AG04449 (cell line): ENCODE measurements at regions of chr10 and their contacts with region 1.

Region 1: DNA sequence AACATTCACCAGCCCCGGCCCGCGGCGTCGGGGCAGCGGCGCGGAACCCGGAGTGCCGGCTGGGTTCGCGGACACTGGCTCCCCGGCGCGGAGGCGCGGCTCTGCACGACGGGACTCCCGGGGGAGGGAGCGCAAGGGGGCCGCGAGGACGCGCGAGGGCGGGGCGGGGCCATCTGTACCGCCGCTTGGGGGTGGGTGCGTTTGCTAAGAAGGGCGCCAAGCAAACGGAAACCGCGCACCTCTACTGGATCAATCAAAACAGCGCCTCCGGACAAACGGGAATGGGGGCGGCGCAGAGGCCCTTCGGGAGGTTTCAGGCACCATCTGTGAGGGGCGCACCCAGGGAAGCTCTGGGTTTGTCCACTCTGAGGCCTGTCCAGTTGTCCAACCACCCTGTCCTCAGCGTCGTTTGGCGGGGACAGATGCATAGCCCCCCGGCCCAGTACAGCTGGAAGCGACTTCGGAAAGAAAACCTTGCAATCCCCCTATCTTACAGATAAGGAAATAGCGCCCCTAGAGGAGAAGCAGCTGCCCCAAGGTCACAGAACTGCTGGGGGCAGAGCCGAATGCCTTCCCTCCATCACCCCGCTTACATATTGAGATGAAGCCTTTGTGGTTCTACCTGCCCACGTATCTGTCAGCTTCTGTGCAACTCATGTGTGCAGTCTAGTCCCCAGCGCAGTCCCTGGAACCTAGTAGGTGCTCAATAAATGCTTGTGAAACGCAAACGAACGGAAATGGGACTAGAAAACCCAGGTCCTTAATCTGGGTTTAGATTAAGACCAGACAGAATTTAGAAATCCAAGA is 10.7 kb upstream of the SLIT1 start:
- DNase-seq: no peak
- H3K4me3 ChIP-seq: peak overlapping the region; percentile 56
- CTCF ChIP-seq: peak; percentile 69

Region 2: GRCh38 chr10:97081621-97082235 is 114.7 kb before region 1 on chr10:
- CTCF ChIA-PET with region 1: interaction called, 15 read pairs
- POLR2A ChIA-PET with region 1: no interaction called
- DNase-seq: no peak
- H3K4me3 ChIP-seq: no peak overlapping the region
- CTCF ChIP-seq: peak; percentile 93